ENCODE measurements at regions of chr12 and their contacts with region 1.

Region 1: DNA sequence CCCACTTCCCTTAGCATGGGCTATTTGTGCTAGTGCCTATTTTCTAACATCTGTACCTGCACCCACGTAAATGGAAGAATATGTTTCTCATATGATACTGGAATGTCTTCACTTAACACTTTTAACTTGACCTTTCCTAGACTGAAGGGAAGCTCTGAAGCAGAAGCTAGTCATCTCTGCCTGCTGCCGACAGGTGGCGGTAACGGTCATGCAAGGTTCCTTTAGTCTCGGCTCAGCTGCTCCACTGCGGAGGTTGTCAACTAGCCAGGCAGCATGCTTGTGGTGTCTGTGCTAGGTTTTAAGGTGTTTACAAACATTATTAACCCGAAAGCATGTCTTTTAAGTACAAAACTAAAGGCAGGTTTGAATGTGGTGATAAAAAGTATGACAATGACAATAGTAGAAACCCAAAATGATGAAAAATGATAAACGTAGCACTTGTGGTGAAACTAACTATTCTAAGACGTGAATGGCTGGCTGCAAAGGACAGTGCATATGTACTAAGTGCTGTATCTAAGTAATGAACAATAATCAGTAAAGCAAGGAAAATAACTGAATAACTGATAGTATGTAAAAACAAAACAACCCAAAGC is 117.2 kb downstream of the GRIN2B start:
- DNase-seq: peak; percentile 69 to 90 (median 83)
- H3K4me3 ChIP-seq: no peak overlapping the region
- H3K27ac ChIP-seq: no peak overlapping the region
- H3K4me1 ChIP-seq: no peaks in the 10 kb centered on the region
- H3K27me3 ChIP-seq: no peaks in the 10 kb centered on the region
- CTCF ChIP-seq: peak; percentile 87

Region 2: DNA sequence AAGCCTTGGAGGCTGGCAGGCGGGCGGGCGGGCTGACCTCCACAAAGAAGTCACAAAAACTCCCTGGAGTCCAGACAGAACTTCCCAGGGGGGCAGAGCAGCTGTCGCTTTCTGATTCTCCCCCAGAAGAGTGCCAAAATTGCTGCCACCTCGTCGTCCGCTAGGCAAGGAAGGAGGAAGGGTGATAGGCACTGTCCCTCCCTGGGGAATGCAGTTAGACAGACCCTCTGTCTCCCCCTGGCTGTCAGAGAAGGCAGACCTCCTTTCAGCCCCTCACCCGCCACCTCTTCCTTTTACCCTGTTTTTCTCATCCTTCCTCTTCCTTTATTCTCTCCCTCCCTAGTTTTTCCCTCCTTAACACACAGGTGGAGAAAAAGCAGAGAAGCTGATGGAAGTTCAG is 98.5 kb after region 1 on chr12:
- intact Hi-C with region 1: loop called (anchors 5 kb)
- DNase-seq: no peak
- H3K4me3 ChIP-seq: no peak overlapping the region
- H3K27ac ChIP-seq: no peak overlapping the region
- H3K4me1 ChIP-seq: no peaks in the 10 kb centered on the region
- H3K27me3 ChIP-seq: no peaks in the 10 kb centered on the region
- CTCF ChIP-seq: peak; percentile 17

Region 3: DNA sequence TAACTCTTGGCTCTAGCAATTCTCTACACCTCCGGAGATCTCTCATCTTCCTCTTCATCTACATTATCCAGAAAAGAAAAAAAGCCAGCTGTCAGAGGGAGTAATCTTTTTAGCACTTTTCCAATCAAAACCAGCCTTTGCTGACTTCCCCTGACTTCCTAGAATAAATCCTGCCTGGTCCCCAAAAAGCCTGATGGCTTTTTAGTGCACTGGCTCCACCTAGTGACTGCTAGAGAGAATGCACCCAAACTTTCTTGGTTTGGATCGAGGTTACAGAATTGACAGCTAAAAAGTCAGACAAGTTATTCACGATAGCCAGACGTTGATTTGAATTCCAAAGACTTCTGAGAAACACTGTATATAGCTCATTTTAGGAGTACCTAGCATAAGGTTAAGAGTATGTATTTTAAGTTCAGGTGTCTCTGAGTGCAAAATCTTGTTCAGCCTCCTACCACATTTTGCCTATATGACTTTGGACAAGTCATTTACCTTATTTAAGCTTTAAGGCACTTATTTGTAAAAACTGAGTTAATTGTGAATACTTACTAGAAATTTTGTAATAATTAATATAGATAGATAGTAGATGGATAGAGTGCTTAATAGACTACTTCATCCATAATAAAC is 302.9 kb after region 1 on chr12:
- intact Hi-C with region 1: loop called (anchors 10 kb)
- DNase-seq: peak in 4 of 5 donors; percentile 48 to 82 (median 68)
- H3K4me3 ChIP-seq: no peak overlapping the region
- H3K27ac ChIP-seq: no peak overlapping the region
- H3K4me1 ChIP-seq: no peaks in the 10 kb centered on the region
- H3K27me3 ChIP-seq: no peaks in the 10 kb centered on the region
- CTCF ChIP-seq: peak; percentile 87

Region 4: DNA sequence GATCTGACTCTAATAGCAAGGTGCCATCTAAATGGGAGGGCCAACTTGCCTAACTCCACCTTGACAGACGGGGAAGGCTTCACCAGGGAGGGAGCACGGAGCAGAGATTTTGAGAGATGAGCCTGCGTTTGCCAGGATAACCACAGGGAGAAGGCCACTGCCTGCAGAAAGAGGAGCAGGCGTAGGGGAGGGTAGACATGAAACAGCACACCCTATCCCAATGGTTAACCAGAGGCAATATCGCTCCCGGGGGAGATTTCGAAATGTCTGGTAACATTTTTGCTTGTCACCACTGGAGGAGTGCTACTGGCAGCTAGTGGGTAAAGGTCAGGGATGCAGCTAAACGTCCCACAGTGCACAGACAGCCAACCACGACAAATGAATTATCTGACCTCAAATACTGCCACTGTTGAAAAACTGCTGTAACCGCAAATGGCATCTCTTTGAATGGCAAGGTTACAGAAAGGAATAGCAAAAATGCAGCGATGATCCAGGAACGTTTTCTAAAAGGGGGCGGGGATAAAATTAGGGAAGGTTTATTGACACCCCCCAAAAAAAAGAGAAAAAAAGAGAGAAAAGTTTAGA is 375.3 kb after region 1 on chr12:
- intact Hi-C with region 1: no loop called
- DNase-seq: peak in 4 of 5 donors; percentile 51 to 76 (median 68)
- H3K4me3 ChIP-seq: peak overlapping the region in 2 of 3 donors; percentile 5 to 39
- H3K27ac ChIP-seq: peak overlapping the region; percentile 9 to 49
- H3K4me1 ChIP-seq: peaks cover 0 to 10% (median 0%) of the 10 kb centered on the region in 3 donors
- H3K27me3 ChIP-seq: no peaks in the 10 kb centered on the region
- CTCF ChIP-seq: no peak

Measured in kidney (tissue), 22 donors.